ENCODE measurements at regions of chr3 and their contacts with region 1.

Region 1: GRCh38 chr3:119469381-119470189 is 822 bp downstream of the POGLUT1 start:
- DNase-seq: no peak
- ATAC-seq: peak; percentile 45
- H3K4me3 Mint-ChIP-seq: peak overlapping the region; percentile 93
- H3K27ac Mint-ChIP-seq: peak overlapping the region; percentile 90
- H3K4me1 Mint-ChIP-seq: peaks cover 32% of the 10 kb centered on the region
- H3K27me3 Mint-ChIP-seq: no peaks in the 10 kb centered on the region
- CTCF ChIP-seq: no peak

Region 2: GRCh38 chr3:118501152-118501551 is 968.4 kb before region 1 on chr3:
- CTCF ChIA-PET with region 1: no interaction called
- POLR2A ChIA-PET with region 1: no interaction called
- intact Hi-C with region 1: no loop called
- DNase-seq: no peak
- ATAC-seq: no peak
- H3K4me3 Mint-ChIP-seq: no peak overlapping the region
- H3K27ac Mint-ChIP-seq: no peak overlapping the region
- H3K4me1 Mint-ChIP-seq: no peaks in the 10 kb centered on the region
- H3K27me3 Mint-ChIP-seq: no peaks in the 10 kb centered on the region
- CTCF ChIP-seq: no peak

Region 3: GRCh38 chr3:119293871-119294695 is 175.5 kb before region 1 on chr3 and contains the start of gene ARHGAP31:
- CTCF ChIA-PET with region 1: no interaction called
- POLR2A ChIA-PET with region 1: interaction called, 5 read pairs
- intact Hi-C with region 1: loop called (anchors 2 kb)
- DNase-seq: peak; percentile 56
- ATAC-seq: peak; percentile 73
- H3K4me3 Mint-ChIP-seq: peak within 1 kb of the TSS; percentile 88
- H3K27ac Mint-ChIP-seq: peak within 1 kb of the TSS; percentile 90
- H3K4me1 Mint-ChIP-seq: peaks cover 61% of the 10 kb centered on the region
- H3K27me3 Mint-ChIP-seq: no peaks in the 10 kb centered on the region
- CTCF ChIP-seq: no peak
- total RNA-seq, gene ARHGAP31: 23.7 and 26.0 TPM in 2 replicates

Region 4: DNA sequence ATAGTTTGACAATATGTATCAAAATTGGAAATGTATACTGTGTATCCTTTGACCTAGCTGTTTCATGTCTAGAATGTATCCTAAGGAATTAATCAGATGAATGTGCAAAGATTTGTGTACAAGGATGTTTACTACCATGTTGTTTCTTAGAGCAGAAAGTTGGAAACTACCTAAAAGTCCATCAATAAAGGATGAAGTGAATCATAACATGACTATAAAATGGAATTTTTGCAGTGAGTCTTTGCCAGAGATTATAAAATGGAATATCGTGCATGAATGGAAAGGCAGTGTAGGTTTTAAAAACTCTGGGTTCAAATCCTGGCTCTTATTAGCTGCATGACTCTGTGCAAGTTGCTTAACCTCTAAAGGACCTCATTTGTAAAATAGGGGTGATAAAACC is 13.5 kb after region 1 on chr3:
- CTCF ChIA-PET with region 1: no interaction called
- POLR2A ChIA-PET with region 1: no interaction called
- intact Hi-C with region 1: no loop called
- DNase-seq: no peak
- ATAC-seq: no peak
- H3K4me3 Mint-ChIP-seq: no peak overlapping the region
- H3K27ac Mint-ChIP-seq: no peak overlapping the region
- H3K4me1 Mint-ChIP-seq: no peaks in the 10 kb centered on the region
- H3K27me3 Mint-ChIP-seq: no peaks in the 10 kb centered on the region
- CTCF ChIP-seq: no peak

Region 5: DNA sequence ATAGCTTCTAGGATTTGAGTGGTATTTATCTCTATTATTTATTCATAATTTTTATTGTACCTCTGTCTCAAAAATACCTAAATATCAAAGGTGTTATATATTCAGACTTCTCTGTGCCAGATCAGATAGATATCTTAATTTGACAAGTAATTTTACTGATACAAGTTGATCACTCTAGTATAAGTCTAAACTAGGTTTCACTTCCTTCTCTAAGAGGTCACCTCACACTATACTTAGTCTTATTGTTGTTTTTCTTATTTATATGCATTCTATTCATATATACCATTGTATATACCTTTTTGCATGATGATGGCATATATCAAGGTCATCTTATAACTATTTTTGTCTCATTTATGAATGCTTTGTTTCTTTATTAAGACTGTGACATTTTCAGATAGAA is 1238.8 kb after region 1 on chr3:
- CTCF ChIA-PET with region 1: no interaction called
- POLR2A ChIA-PET with region 1: no interaction called
- intact Hi-C with region 1: no loop called
- DNase-seq: no peak
- ATAC-seq: no peak
- H3K4me3 Mint-ChIP-seq: no peak overlapping the region
- H3K27ac Mint-ChIP-seq: no peak overlapping the region
- H3K4me1 Mint-ChIP-seq: peaks cover 11% of the 10 kb centered on the region
- H3K27me3 Mint-ChIP-seq: no peaks in the 10 kb centered on the region
- CTCF ChIP-seq: no peak

Measured in activated B cell treated with CpG ODN at 0.5 μM for 24 hours (primary cell).